ENCODE measurements at regions of chr13 and their contacts with region 1.

Region 1: DNA sequence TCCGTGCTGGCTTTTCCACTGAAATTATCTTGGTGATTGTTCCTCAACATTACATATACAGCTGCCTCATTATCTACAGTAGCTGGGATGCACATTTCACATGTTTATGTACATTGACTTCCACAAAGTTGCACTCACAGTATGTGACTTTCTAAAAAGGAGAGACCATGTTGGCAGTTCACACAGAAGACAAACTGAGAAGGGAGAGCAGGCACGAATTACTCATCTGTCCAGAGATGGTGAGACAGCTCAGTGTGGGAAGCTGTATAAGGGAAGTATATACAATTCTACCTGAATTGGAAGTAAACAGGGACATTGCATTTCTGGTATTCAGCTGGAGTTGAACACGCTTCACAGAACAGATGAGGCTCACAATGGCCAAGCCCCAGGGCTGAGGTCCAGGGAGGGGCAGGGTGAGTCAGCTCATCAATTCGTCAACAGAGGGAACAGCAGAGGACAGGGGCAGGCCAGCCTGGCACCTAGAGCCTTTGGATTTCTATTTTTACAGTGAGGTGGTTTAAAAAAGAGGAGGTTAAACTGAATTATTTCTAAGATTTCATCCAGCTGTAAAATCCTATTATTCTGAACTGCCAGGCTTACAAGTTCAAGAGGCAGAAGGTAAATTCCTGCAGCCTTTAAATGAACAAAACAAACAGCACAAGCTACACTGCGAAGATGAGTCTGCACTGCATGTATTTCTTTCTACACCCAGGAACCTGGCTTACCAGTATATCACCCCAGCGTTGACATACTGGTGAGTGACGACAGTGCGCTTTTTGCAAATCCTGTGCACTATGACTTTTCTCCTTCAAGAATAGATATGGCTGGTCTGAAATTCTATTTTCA is 9.8 kb downstream of the PARP4 start:
- DNase-seq: peak; percentile 45
- H3K4me3 ChIP-seq: no peak overlapping the region
- H3K27ac ChIP-seq: peak overlapping the region; percentile 26
- H3K4me1 ChIP-seq: peaks cover 27% of the 10 kb centered on the region
- H3K27me3 ChIP-seq: no peaks in the 10 kb centered on the region
- CTCF ChIP-seq: no peak
- POLR2A ChIP-seq: no peak

Region 2: GRCh38 chr13:24450530-24450929 is 52.2 kb before region 1 on chr13:
- CTCF ChIA-PET with region 1: no interaction called
- POLR2A ChIA-PET with region 1: no interaction called
- dilution Hi-C with region 1: no loop called
- intact Hi-C with region 1: no loop called
- DNase-seq: no peak
- H3K4me3 ChIP-seq: no peak overlapping the region
- H3K27ac ChIP-seq: no peak overlapping the region
- H3K4me1 ChIP-seq: no peaks in the 10 kb centered on the region
- H3K27me3 ChIP-seq: no peaks in the 10 kb centered on the region
- CTCF ChIP-seq: no peak
- POLR2A ChIP-seq: no peak

Region 3: GRCh38 chr13:25301347-25302047 is 798.7 kb after region 1 on chr13 and contains the start of gene NUP58:
- CTCF ChIA-PET with region 1: no interaction called
- POLR2A ChIA-PET with region 1: no interaction called
- dilution Hi-C with region 1: no loop called
- intact Hi-C with region 1: loop called (anchors 5 kb)
- DNase-seq: peak; percentile 96
- H3K4me3 ChIP-seq: peak within 1 kb of the TSS; percentile 94 to 99 (median 99)
- H3K27ac ChIP-seq: peak within 1 kb of the TSS; percentile 79
- H3K4me1 ChIP-seq: peaks cover 16% of the 10 kb centered on the region
- H3K27me3 ChIP-seq: peaks cover 8 to 22% of the 10 kb centered on the region in 2 experiments
- CTCF ChIP-seq: no peak
- POLR2A ChIP-seq: peak; percentile 70
- total RNA-seq, gene NUP58: 49.6 and 59.2 TPM in 2 replicates

Measured in endothelial cell of umbilical vein (primary cell).